A673 (cell line): ENCODE measurements at regions of chr16 and their contacts with region 1.

Region 1: GRCh38 chr16:391885-392335 is 5.1 kb upstream of the NME4 start:
- DNase-seq: peak; percentile 84
- H3K4me3 ChIP-seq: no peak overlapping the region
- H3K27ac ChIP-seq: no peak overlapping the region
- H3K4me1 ChIP-seq: no peaks in the 10 kb centered on the region
- H3K27me3 ChIP-seq: no peaks in the 10 kb centered on the region
- CTCF ChIP-seq: peak; percentile 94

Region 2: DNA sequence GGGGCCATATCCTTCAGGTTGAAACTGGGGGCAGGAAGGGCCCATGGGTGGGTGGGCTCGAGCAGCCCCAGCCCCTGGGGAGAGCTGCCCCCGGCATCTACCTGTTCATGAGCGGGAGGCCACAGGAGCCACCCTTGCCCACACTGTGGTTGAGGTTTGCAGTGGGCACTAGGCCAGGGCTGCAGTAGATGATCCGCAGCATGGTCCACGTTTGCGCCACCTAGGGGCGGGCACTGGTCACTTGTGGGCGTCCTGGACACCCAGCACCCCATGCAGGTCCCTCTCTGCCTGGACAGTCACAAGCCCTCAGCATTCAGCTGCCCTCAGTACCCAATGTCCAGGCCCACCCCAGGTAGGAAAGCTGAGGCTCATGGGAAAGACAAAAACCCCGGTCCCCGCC is 294.1 kb after region 1 on chr16:
- CTCF ChIA-PET with region 1: no interaction called
- POLR2A ChIA-PET with region 1: no interaction called
- intact Hi-C with region 1: loop called (anchors 5 kb)
- DNase-seq: no peak
- H3K4me3 ChIP-seq: no peak overlapping the region
- H3K27ac ChIP-seq: no peak overlapping the region
- H3K4me1 ChIP-seq: peaks cover 31% of the 10 kb centered on the region
- H3K27me3 ChIP-seq: no peaks in the 10 kb centered on the region
- CTCF ChIP-seq: peak; percentile 64